ENCODE measurements at regions of chr3 and their contacts with region 1.

Region 1: GRCh38 chr3:189652042-189652441 is 20.9 kb downstream of the TP63 start:
- DNase-seq: no peak
- H3K4me3 ChIP-seq: no peak overlapping the region
- H3K27ac ChIP-seq: no peak overlapping the region
- H3K4me1 ChIP-seq: no peaks in the 10 kb centered on the region
- H3K27me3 ChIP-seq: no peaks in the 10 kb centered on the region
- CTCF ChIP-seq: peak; percentile 40

Region 2: GRCh38 chr3:188978421-188979171 is 673.4 kb before region 1 on chr3:
- CTCF ChIA-PET with region 1: no interaction called
- POLR2A ChIA-PET with region 1: no interaction called
- intact Hi-C with region 1: no loop called
- DNase-seq: no peak
- H3K4me3 ChIP-seq: no peak overlapping the region
- H3K27ac ChIP-seq: no peak overlapping the region
- H3K4me1 ChIP-seq: no peaks in the 10 kb centered on the region
- H3K27me3 ChIP-seq: no peaks in the 10 kb centered on the region
- CTCF ChIP-seq: no peak

Region 3: GRCh38 chr3:189613122-189613521 is 38.9 kb before region 1 on chr3:
- CTCF ChIA-PET with region 1: no interaction called
- POLR2A ChIA-PET with region 1: no interaction called
- intact Hi-C with region 1: no loop called
- DNase-seq: no peak
- H3K4me3 ChIP-seq: no peak overlapping the region
- H3K27ac ChIP-seq: no peak overlapping the region
- H3K4me1 ChIP-seq: no peaks in the 10 kb centered on the region
- H3K27me3 ChIP-seq: no peaks in the 10 kb centered on the region
- CTCF ChIP-seq: no peak

Region 4: GRCh38 chr3:189641776-189642175 is 10.3 kb before region 1 on chr3:
- CTCF ChIA-PET with region 1: no interaction called
- POLR2A ChIA-PET with region 1: no interaction called
- intact Hi-C with region 1: loop called (anchors 1 kb)
- DNase-seq: peak in 1 of 2 experiments; percentile 69
- H3K4me3 ChIP-seq: no peak overlapping the region
- H3K27ac ChIP-seq: no peak overlapping the region
- H3K4me1 ChIP-seq: peaks cover 17% of the 10 kb centered on the region
- H3K27me3 ChIP-seq: no peaks in the 10 kb centered on the region
- CTCF ChIP-seq: no peak

Measured in PC-9 (cell line).